ENCODE measurements at regions of chr5 and their contacts with region 1.

Region 1: DNA sequence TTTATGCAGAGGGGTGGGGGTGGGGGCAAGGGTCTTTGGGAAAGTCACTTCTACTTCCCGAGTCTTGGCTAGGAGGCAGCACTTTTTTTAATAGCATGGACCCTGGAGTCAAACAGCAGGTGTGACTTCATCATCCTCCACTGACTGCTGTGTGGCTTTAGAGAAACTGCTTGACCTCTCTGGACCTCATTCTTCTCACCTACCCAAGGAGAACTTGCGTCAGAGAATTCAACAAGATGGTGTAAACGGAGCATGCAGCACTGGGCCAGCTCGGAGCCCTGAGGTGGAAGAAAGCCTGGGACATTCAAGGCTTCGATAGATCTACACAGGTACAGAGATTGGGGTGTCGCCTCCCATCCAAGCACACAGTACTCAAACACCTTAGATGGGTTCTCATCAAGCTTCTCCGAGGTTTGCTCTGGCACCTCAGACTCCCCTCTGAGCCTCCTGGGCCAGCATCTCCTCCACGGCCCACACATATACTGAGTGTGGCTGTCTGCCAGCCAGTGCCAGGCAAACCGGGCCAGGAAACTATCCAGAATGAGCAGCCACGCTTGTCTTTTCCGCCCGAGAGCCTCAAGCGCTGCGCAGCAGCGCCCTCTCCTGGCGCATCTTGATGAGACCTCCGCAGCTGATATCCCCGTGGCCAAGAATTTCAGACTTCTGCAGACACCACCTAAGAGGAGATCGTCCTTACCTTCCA is 4.6 kb upstream of the SLC25A48 start:
- DNase-seq: peak; percentile 61 to 85
- ATAC-seq: peak; percentile 27
- H3K4me3 ChIP-seq: no peak overlapping the region
- H3K27ac ChIP-seq: no peak overlapping the region
- H3K4me1 ChIP-seq: no peaks in the 10 kb centered on the region
- H3K27me3 ChIP-seq: peaks cover 0 to 2% of the 10 kb centered on the region in 2 donors

Region 2: DNA sequence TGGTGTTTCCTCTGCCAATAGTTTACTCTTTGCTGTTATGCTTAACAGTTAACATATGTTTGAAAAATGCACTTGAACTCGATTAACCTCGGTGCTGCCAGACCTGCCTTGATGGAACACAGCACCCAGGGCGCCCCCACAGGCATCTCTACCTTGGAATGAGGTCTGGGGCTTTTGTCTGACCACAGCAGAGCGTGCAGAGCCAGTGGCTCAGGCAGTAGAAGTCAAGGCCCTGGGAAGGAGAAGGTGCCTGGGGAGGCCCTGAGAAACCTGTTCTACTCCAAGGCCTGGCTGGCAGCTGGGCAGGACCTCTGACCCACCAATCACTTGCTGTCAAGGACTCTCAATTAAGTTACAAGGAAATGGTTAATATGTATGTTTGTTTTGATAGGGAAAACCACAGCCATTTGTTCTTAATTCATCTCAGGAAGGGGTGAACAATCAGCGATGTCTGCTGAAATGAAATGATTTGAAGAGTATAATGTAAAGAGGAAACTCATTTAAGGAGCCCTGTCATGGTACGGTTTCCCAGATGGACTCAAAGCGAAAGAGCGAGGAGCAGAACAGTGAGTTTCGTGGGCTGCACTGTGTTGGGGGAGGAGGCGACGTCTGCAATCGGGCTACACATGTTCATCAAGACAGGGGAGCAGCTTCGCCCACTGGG is 452.7 kb before region 1 on chr5:
- intact Hi-C with region 1: no loop called
- DNase-seq: no peak
- ATAC-seq: no peak
- H3K4me3 ChIP-seq: no peak overlapping the region
- H3K27ac ChIP-seq: no peak overlapping the region
- H3K4me1 ChIP-seq: peaks cover 0 to 3% of the 10 kb centered on the region in 2 donors
- H3K27me3 ChIP-seq: no peaks in the 10 kb centered on the region

Region 3: GRCh38 chr5:135560858-135561257 is 269.0 kb before region 1 on chr5:
- intact Hi-C with region 1: loop called (anchors 2 to 10 kb)
- DNase-seq: peak; percentile 80 to 88
- ATAC-seq: peak; percentile 83
- H3K4me3 ChIP-seq: no peak overlapping the region
- H3K27ac ChIP-seq: no peak overlapping the region
- H3K4me1 ChIP-seq: no peaks in the 10 kb centered on the region
- H3K27me3 ChIP-seq: no peaks in the 10 kb centered on the region

Region 4: GRCh38 chr5:135667673-135668072 is 162.2 kb before region 1 on chr5:
- intact Hi-C with region 1: no loop called
- DNase-seq: no peak
- ATAC-seq: peak; percentile 28
- H3K4me3 ChIP-seq: no peak overlapping the region
- H3K27ac ChIP-seq: no peak overlapping the region
- H3K4me1 ChIP-seq: no peaks in the 10 kb centered on the region
- H3K27me3 ChIP-seq: peaks cover 0 to 2% of the 10 kb centered on the region in 2 donors